Activated CD8-positive, alpha-beta T cell treated with anti-CD3 and anti-CD28 coated beads for 36 hours (primary cell): ENCODE measurements at regions of chr10 and their contacts with region 1.

Region 1: DNA sequence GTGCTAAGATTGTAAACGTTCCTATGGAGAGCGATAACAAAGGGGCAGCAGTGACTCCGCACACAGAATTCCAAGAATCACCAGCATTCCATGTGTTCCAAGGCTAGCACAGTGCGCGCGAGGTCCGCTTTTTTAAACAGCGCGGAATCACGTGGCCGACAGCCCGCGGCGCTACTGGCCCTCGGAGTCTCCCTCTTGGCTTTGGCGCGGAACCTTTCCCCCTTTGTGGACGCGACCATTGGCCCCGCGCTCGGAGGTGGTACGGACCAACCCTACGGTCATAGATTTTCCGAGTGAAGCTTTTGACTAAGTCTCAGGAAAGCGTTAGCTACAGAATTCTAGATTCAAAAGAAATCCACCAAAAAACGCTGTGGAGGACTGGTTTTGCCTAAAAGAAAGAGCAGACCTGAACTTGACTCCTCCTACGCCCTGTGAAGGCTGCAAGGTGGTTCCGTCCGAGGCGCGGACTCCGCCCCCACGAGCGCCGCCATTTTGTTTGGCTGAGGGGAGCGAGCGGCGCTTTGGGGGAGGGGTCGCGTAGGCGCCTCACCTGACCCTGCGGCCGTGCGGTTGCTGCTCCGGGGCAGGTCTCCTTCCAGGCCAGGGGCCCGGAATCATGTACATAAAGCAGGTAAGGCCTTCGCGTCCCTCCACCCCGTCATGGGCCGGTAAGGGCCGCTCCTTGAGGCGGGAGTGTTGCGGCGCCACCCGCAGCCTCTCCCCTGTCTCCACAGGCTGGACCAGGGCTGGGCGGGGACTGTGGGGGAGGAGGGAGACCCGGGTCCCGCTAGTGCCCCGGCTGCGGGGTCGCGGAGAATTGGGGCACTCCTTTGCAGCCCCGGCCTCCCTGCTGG is at the start of gene SMC3:
- DNase-seq: peak; percentile 93
- ATAC-seq: peak; percentile 86
- H3K4me3 Mint-ChIP-seq: peak within 1 kb of the TSS; percentile 98
- H3K27ac Mint-ChIP-seq: peak within 1 kb of the TSS; percentile 99
- H3K4me1 Mint-ChIP-seq: peaks cover 32% of the 10 kb centered on the region
- H3K27me3 Mint-ChIP-seq: peaks cover 20% of the 10 kb centered on the region
- CTCF ChIP-seq: no peak
- total RNA-seq, gene SMC3: 69.7 to 71.2 TPM

Region 2: GRCh38 chr10:110556969-110557601 is 10.3 kb before region 1 on chr10:
- CTCF ChIA-PET with region 1: interaction called, 9 read pairs
- POLR2A ChIA-PET with region 1: interaction called, 11 read pairs
- intact Hi-C with region 1: no loop called
- DNase-seq: peak; percentile 89
- ATAC-seq: peak; percentile 99
- H3K4me3 Mint-ChIP-seq: no peak overlapping the region
- H3K27ac Mint-ChIP-seq: no peak overlapping the region
- H3K4me1 Mint-ChIP-seq: peaks cover 8% of the 10 kb centered on the region
- H3K27me3 Mint-ChIP-seq: peaks cover 4% of the 10 kb centered on the region
- CTCF ChIP-seq: peak; percentile 71